B cell (primary cell): ENCODE measurements at regions of chr12 and their contacts with region 1.

Region 1: DNA sequence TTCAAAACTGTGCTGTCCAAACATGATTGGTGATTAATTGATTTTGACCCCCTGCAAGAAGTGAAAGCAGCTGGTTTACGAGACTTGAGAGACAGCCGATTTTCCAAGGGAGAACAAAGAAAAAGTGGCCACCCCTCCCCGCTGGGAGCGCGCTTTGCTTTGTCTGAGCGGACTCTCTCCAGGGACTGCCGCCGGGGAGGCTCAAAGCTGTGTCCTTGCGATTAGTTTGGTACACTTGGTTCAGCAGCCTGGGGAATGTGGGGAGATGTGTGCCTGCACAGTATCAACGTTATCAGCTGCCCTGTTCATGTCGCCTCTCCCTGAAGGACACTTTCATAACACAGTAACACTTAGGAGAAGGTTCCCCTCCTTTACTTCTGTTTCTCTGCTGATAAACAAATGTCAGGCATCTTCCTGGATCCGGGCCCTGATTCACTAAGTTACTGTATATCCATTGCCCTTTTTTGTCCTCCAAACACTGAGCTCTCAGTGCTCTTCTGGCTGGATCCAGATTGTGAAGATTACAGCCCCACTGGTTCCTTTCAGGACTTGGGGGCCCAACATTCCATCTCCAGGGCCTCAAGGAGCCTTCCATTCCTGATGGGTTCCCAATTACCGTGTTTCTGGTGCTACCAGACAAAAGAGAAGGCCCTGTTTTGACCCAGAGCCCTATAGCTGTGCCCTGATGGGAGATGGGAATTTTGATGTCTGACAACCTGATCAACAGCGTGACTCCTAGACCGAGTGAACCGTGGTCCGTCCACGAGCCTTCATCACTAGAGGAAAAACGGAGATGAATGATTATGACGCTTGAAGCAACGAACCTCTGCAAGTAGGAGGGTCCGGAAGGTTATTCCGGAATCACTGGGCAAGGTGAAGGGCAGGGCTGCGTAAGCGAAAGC is 31.7 kb upstream of the TUBA1C start:
- DNase-seq: no peak
- ATAC-seq: no peak
- H3K4me3 ChIP-seq: peak overlapping the region; percentile 46 to 72 (median 64)
- H3K4me3 Mint-ChIP-seq: peak overlapping the region; percentile 96
- H3K27ac ChIP-seq: peak overlapping the region; percentile 56 to 73
- H3K27ac Mint-ChIP-seq: peak overlapping the region; percentile 90
- H3K4me1 ChIP-seq: peaks cover 5 to 17% of the 10 kb centered on the region in 2 donors
- H3K4me1 Mint-ChIP-seq: peaks cover 17% of the 10 kb centered on the region
- H3K27me3 ChIP-seq: no peaks in the 10 kb centered on the region
- H3K27me3 Mint-ChIP-seq: no peaks in the 10 kb centered on the region
- CTCF ChIP-seq: no peak

Region 2: GRCh38 chr12:49018261-49019119 is 214.7 kb before region 1 on chr12 and contains the start of gene PRKAG1:
- CTCF ChIA-PET with region 1: no interaction called
- POLR2A ChIA-PET with region 1: no interaction called
- intact Hi-C with region 1: loop called (anchors 1 kb)
- DNase-seq: peak; percentile 98
- ATAC-seq: peak; percentile 88
- H3K4me3 ChIP-seq: peak within 1 kb of the TSS; percentile 79 to 88 (median 86)
- H3K4me3 Mint-ChIP-seq: peak within 1 kb of the TSS; percentile 91
- H3K27ac ChIP-seq: peak within 1 kb of the TSS; percentile 95 to 99
- H3K27ac Mint-ChIP-seq: peak within 1 kb of the TSS; percentile 98
- H3K4me1 ChIP-seq: peaks cover 18 to 21% of the 10 kb centered on the region in 2 donors
- H3K4me1 Mint-ChIP-seq: peaks cover 29% of the 10 kb centered on the region
- H3K27me3 ChIP-seq: no peaks in the 10 kb centered on the region
- H3K27me3 Mint-ChIP-seq: no peaks in the 10 kb centered on the region
- CTCF ChIP-seq: peak; percentile 74
- total RNA-seq, gene PRKAG1: 58.6 and 60.0 TPM in 2 replicates

Region 3: GRCh38 chr12:49098035-49098451 is 135.1 kb before region 1 on chr12:
- CTCF ChIA-PET with region 1: interaction called, 39 read pairs
- POLR2A ChIA-PET with region 1: interaction called, 12 read pairs
- intact Hi-C with region 1: no loop called
- DNase-seq: peak; percentile 74
- ATAC-seq: peak; percentile 77
- H3K4me3 ChIP-seq: no peak overlapping the region
- H3K4me3 Mint-ChIP-seq: no peak overlapping the region
- H3K27ac ChIP-seq: no peak overlapping the region
- H3K27ac Mint-ChIP-seq: peak overlapping the region; percentile 20
- H3K4me1 ChIP-seq: peaks cover 15 to 16% of the 10 kb centered on the region in 2 donors
- H3K4me1 Mint-ChIP-seq: peaks cover 18% of the 10 kb centered on the region
- H3K27me3 ChIP-seq: peaks cover 0 to 22% (median 17%) of the 10 kb centered on the region in 4 experiments
- H3K27me3 Mint-ChIP-seq: peaks cover 17% of the 10 kb centered on the region
- CTCF ChIP-seq: peak; percentile 80

Region 4: GRCh38 chr12:49161092-49161795 is 71.9 kb before region 1 on chr12:
- CTCF ChIA-PET with region 1: no interaction called
- POLR2A ChIA-PET with region 1: no interaction called
- intact Hi-C with region 1: loop called (anchors 2 kb)
- DNase-seq: peak; percentile 55
- ATAC-seq: peak; percentile 39
- H3K4me3 ChIP-seq: peak overlapping the region in 4 of 5 experiments; percentile 12 to 65 (median 40)
- H3K4me3 Mint-ChIP-seq: peak overlapping the region; percentile 88
- H3K27ac ChIP-seq: peak overlapping the region; percentile 66 to 75
- H3K27ac Mint-ChIP-seq: peak overlapping the region; percentile 87
- H3K4me1 ChIP-seq: peaks cover 27 to 31% of the 10 kb centered on the region in 2 donors
- H3K4me1 Mint-ChIP-seq: peaks cover 29% of the 10 kb centered on the region
- H3K27me3 ChIP-seq: no peaks in the 10 kb centered on the region
- H3K27me3 Mint-ChIP-seq: no peaks in the 10 kb centered on the region
- CTCF ChIP-seq: no peak

Region 5: GRCh38 chr12:49264738-49265515 is 31.7 kb after region 1 on chr12 and contains the start of gene TUBA1C:
- CTCF ChIA-PET with region 1: interaction called, 5 read pairs
- POLR2A ChIA-PET with region 1: no interaction called
- intact Hi-C with region 1: loop called (anchors 1 kb)
- DNase-seq: peak; percentile 92
- ATAC-seq: peak; percentile 93
- H3K4me3 ChIP-seq: peak within 1 kb of the TSS; percentile 42 to 98 (median 83)
- H3K4me3 Mint-ChIP-seq: peak within 1 kb of the TSS; percentile 97
- H3K27ac ChIP-seq: peak within 1 kb of the TSS; percentile 80 to 82
- H3K27ac Mint-ChIP-seq: peak within 1 kb of the TSS; percentile 94
- H3K4me1 ChIP-seq: peaks cover 4 to 12% of the 10 kb centered on the region in 2 donors
- H3K4me1 Mint-ChIP-seq: peaks cover 20% of the 10 kb centered on the region
- H3K27me3 ChIP-seq: no peaks in the 10 kb centered on the region
- H3K27me3 Mint-ChIP-seq: no peaks in the 10 kb centered on the region
- CTCF ChIP-seq: no peak
- total RNA-seq, gene TUBA1C: 34.9 and 35.2 TPM in 2 replicates